B cell (primary cell): ENCODE measurements at regions of chr2 and their contacts with region 1.

Region 1: DNA sequence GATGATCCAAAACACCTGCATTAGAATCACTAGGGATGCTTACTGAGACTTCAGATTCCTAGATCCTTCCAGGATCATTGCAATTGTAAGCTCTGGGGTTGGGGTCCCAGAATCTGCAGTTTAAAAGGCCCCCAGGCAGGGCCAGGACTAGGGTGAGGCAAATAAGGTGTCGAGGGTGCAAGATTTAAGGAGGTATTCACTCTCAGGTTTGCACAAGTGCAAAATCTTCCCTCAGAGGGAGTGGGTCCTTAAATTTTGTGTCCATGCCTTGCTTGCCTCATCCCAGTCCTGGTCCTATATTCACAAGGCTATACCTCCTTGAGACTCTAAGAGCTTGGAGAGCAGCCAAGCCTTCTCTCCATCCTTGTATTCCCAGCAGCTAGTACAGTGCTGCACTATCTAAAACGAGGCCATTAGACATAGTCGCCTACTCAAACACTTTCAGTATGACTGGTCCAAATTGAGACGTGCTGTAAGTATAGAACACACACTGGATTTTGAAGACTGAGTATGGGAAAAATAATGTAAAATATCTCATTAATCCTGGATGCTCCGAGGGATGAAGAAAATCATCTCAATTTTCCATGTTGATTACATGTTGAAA is 31.6 kb upstream of the MREG start:
- DNase-seq: no peak
- ATAC-seq: no peak
- H3K4me3 ChIP-seq: no peak overlapping the region
- H3K4me3 Mint-ChIP-seq: no peak overlapping the region
- H3K27ac ChIP-seq: no peak overlapping the region
- H3K27ac Mint-ChIP-seq: no peak overlapping the region
- H3K4me1 ChIP-seq: no peaks in the 10 kb centered on the region
- H3K4me1 Mint-ChIP-seq: no peaks in the 10 kb centered on the region
- H3K27me3 ChIP-seq: no peaks in the 10 kb centered on the region
- H3K27me3 Mint-ChIP-seq: no peaks in the 10 kb centered on the region
- CTCF ChIP-seq: no peak

Region 2: DNA sequence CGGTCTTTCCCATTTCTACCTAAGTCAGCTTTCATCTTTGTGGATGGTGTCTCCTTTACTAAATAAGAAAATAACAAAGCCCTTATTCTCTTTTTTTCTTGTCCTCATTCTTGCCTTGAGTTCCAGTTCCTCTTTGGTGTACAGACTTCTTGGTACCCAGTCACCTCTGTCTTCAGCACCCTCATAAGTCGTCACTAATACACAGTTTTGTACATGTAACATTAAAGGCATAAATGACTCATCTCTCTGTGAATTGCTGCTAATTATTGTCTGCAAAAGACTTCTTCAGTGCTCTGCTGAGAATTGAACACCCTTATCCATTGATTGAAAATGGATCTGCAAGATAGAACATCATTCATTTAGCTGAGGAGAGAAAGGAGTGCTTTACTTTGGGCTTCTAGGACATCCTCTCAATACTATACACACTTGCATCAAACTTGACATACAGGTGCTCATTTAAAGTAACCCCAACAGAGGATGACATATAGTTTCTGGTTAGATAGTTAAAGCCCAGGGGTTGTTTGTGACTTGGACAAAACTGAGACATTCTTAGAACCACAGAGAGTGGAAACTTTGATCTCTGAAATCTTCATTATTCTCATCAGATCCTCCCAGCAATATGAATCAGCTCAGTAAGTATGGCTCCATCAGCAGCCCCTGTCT is 161.2 kb after region 1 on chr2:
- CTCF ChIA-PET with region 1: no interaction called
- POLR2A ChIA-PET with region 1: interaction called, 10 read pairs
- intact Hi-C with region 1: no loop called
- DNase-seq: no peak
- ATAC-seq: peak; percentile 24
- H3K4me3 ChIP-seq: no peak overlapping the region
- H3K4me3 Mint-ChIP-seq: no peak overlapping the region
- H3K27ac ChIP-seq: no peak overlapping the region
- H3K27ac Mint-ChIP-seq: peak overlapping the region; percentile 4
- H3K4me1 ChIP-seq: no peaks in the 10 kb centered on the region
- H3K4me1 Mint-ChIP-seq: peaks cover 13% of the 10 kb centered on the region
- H3K27me3 ChIP-seq: no peaks in the 10 kb centered on the region
- H3K27me3 Mint-ChIP-seq: no peaks in the 10 kb centered on the region
- CTCF ChIP-seq: no peak

Region 3: GRCh38 chr2:216428618-216429350 is 383.8 kb after region 1 on chr2:
- CTCF ChIA-PET with region 1: no interaction called
- POLR2A ChIA-PET with region 1: no interaction called
- intact Hi-C with region 1: no loop called
- DNase-seq: no peak
- ATAC-seq: no peak
- H3K4me3 ChIP-seq: no peak overlapping the region
- H3K4me3 Mint-ChIP-seq: no peak overlapping the region
- H3K27ac ChIP-seq: no peak overlapping the region
- H3K27ac Mint-ChIP-seq: no peak overlapping the region
- H3K4me1 ChIP-seq: no peaks in the 10 kb centered on the region
- H3K4me1 Mint-ChIP-seq: no peaks in the 10 kb centered on the region
- H3K27me3 ChIP-seq: no peaks in the 10 kb centered on the region
- H3K27me3 Mint-ChIP-seq: no peaks in the 10 kb centered on the region
- CTCF ChIP-seq: no peak